ENCODE measurements at regions of chr14 and their contacts with region 1.

Region 1: DNA sequence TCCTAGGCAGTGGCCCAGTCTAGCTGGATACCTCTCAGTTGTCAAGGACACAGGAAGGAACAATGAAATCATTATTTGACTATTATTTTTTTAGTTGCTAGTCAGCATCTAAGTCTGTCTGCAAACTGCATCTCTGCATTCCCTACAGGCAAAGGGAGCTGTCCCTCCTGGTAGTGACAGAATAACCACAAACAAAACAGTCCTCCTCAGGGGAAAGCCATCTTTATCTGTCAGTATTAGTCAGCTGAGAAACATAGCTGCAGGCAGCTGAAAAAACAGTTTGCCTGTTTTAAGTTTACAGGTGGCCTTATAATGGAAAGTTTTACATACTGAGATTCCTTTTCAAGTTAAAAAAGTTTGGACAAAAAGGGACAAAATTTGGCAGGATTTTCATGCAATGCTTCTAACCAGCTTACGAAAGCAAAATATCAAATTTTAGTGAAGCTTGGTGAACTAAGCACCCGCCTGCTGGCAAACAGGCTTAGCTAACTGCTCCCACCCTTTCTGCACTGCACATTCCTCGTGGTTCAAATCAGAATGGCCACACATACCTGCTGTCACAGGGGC is 29.5 kb downstream of the SLC25A21 start:
- DNase-seq: no peak
- H3K4me3 Mint-ChIP-seq: no peak overlapping the region
- H3K27ac Mint-ChIP-seq: no peak overlapping the region
- H3K4me1 Mint-ChIP-seq: no peaks in the 10 kb centered on the region
- H3K27me3 Mint-ChIP-seq: no peaks in the 10 kb centered on the region

Region 2: GRCh38 chr14:37165794-37166193 is 22.9 kb after region 1 on chr14:
- CTCF ChIA-PET with region 1: no interaction called
- POLR2A ChIA-PET with region 1: no interaction called
- intact Hi-C with region 1: loop called (anchors 1 kb)
- DNase-seq: no peak
- H3K4me3 Mint-ChIP-seq: no peak overlapping the region
- H3K27ac Mint-ChIP-seq: no peak overlapping the region
- H3K4me1 Mint-ChIP-seq: no peaks in the 10 kb centered on the region
- H3K27me3 Mint-ChIP-seq: peaks cover 3% of the 10 kb centered on the region

Measured in activated CD4-positive, alpha-beta memory T cell treated with anti-CD3 and anti-CD28 coated beads for 36 hours (primary cell).